ENCODE measurements at regions of chr20 and their contacts with region 1.

Region 1: DNA sequence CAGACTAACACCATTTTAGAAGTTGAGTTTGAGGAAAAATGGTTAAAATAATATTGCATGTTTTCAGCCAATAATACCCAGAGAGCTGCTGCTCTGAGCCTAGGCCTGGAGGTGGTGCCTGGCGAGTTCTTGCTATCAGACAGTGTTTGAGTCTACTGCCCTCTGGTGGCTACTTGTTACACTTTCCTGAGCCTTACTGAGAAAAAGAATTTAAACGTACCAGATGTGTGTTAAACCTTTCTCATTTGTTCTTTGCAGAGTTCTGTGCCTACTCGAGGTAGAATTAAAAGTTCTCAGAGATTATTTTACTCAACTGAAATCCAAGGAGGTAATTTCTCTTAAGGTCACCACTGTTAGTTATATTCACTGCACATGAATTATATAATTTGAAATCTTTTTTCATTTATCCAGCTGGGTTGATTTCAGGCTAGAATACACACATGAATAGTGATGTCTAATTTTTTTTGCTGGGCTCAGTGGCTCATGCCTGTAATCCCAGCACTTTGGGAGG is 38.2 kb downstream of the SHLD1 start:
- DNase-seq: peak; percentile 91
- ATAC-seq: peak; percentile 95
- H3K4me3 ChIP-seq: no peak overlapping the region
- H3K27ac ChIP-seq: no peak overlapping the region
- H3K4me1 ChIP-seq: peaks cover 9% of the 10 kb centered on the region
- H3K27me3 ChIP-seq: no peaks in the 10 kb centered on the region
- CTCF ChIP-seq: peak; percentile 98
- POLR2A ChIP-seq: no peak
- RAD21 ChIP-seq: peak; percentile 98

Region 2: DNA sequence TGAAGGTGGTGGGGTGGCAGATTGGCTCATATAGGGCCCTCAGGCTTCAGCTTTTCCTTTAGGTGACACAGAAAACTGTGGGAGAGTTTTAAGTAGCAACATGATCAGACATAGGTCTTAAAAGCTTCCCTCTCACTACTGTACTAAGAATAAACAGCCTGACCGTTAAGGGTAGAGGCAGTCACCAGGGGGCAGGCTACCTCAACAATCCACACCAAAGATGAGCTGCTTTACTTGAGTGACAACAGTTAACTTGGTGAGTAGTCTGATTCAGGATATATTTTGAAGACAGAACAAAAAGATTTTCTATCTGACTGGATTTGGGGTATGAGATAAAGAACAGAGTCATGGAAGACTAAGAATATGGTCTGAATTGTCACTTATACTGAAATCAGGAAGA is 231.3 kb before region 1 on chr20:
- CTCF ChIA-PET with region 1: interaction called, 12 read pairs
- POLR2A ChIA-PET with region 1: no interaction called
- dilution Hi-C with region 1: no loop called
- in situ Hi-C with region 1: no loop called
- intact Hi-C with region 1: loop called (anchors 1 kb)
- DNase-seq: peak; percentile 47
- ATAC-seq: peak; percentile 84
- H3K4me3 ChIP-seq: no peak overlapping the region
- H3K27ac ChIP-seq: no peak overlapping the region
- H3K4me1 ChIP-seq: no peaks in the 10 kb centered on the region
- H3K27me3 ChIP-seq: no peaks in the 10 kb centered on the region
- CTCF ChIP-seq: peak; percentile 59
- POLR2A ChIP-seq: no peak
- RAD21 ChIP-seq: peak; percentile 71

Region 3: DNA sequence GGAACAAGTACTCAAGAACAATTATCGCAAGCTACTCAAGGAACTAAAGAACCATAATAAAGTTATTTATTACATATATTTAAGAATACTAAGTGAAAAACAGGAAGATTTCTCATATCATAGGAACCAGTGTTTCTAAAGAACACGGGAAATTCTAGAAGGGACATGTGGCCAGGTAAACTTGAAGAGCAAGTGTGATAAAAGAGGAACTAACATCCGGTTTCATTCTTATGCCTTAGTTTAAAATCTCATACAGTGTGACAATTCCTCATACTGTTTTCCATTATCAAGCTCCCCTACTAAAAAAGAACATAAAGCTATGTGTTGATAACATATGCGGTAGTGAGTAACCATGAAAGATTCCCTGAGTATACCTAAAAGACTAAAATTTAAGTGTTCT is 201.7 kb before region 1 on chr20:
- CTCF ChIA-PET with region 1: no interaction called
- POLR2A ChIA-PET with region 1: no interaction called
- dilution Hi-C with region 1: loop called (anchors 25 kb)
- in situ Hi-C with region 1: no loop called
- intact Hi-C with region 1: no loop called
- DNase-seq: no peak
- ATAC-seq: no peak
- H3K4me3 ChIP-seq: no peak overlapping the region
- H3K27ac ChIP-seq: no peak overlapping the region
- H3K4me1 ChIP-seq: peaks cover 6% of the 10 kb centered on the region; the same call in 1 of the 2 replicates
- H3K27me3 ChIP-seq: no peaks in the 10 kb centered on the region
- CTCF ChIP-seq: no peak
- POLR2A ChIP-seq: no peak
- RAD21 ChIP-seq: no peak

Region 4: DNA sequence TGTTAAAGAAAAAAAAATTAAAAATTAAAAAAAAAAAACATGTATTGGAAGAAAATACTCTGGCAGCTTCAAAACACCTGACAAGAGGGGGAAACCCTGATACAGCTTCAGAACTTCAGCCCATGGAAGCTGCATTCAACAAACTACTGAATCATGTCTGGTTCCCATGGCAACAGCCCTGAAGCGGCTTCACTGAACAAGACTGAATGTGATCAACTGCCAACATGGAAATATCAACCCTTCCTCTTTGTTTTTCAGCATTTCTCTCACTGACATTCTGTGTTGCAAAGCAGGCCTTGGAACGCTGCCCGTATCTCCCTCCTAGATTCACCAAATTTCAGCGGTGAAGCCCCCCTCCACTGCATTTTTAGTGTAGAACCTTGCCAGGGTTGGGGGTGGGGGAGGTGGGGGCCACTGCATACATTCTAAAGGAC is 129.5 kb before region 1 on chr20:
- CTCF ChIA-PET with region 1: no interaction called
- POLR2A ChIA-PET with region 1: no interaction called
- dilution Hi-C with region 1: no loop called
- in situ Hi-C with region 1: no loop called
- intact Hi-C with region 1: loop called (anchors 5 kb)
- DNase-seq: peak; percentile 91
- ATAC-seq: peak; percentile 24; the same call in 1 of the 2 replicates
- H3K4me3 ChIP-seq: no peak overlapping the region
- H3K27ac ChIP-seq: peak overlapping the region; percentile 71; the same call in 1 of the 2 replicates
- H3K4me1 ChIP-seq: peaks cover 24% of the 10 kb centered on the region
- H3K27me3 ChIP-seq: no peaks in the 10 kb centered on the region
- CTCF ChIP-seq: no peak
- POLR2A ChIP-seq: no peak
- RAD21 ChIP-seq: no peak

Region 5: DNA sequence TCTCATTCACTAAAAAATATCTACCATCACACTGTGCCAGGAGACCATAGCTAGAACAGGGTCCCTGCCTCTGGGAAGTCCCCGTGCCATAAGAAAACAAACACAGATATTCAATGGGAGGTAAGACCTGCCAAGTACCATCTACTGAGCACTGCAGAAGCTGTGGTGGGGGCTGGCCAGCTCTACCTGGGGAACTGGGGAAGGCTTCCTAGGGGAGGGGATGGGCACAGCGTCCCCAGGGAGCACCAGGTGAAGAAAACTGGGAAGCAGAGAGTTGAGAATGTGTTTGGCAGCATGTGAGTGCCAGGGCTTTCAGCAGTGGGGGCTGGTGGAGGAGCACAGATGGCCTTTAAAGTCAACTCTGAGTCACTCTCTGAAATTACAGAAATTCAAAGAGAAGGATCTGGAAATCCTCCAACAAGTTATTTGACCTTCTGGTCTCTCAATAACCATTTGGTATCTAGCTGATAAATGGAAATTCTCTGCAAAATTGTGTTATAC is 46.9 kb after region 1 on chr20:
- CTCF ChIA-PET with region 1: no interaction called
- POLR2A ChIA-PET with region 1: no interaction called
- dilution Hi-C with region 1: no loop called
- in situ Hi-C with region 1: no loop called
- intact Hi-C with region 1: no loop called
- DNase-seq: peak; percentile 62
- ATAC-seq: peak; percentile 87
- H3K4me3 ChIP-seq: no peak overlapping the region
- H3K27ac ChIP-seq: no peak overlapping the region
- H3K4me1 ChIP-seq: peaks cover 6% of the 10 kb centered on the region; the same call in 1 of the 2 replicates
- H3K27me3 ChIP-seq: no peaks in the 10 kb centered on the region
- CTCF ChIP-seq: no peak
- POLR2A ChIP-seq: no peak
- RAD21 ChIP-seq: no peak

Measured in IMR-90 (cell line).